PC-3 (cell line): ENCODE measurements at regions of chr20 and their contacts with region 1.

Region 1: DNA sequence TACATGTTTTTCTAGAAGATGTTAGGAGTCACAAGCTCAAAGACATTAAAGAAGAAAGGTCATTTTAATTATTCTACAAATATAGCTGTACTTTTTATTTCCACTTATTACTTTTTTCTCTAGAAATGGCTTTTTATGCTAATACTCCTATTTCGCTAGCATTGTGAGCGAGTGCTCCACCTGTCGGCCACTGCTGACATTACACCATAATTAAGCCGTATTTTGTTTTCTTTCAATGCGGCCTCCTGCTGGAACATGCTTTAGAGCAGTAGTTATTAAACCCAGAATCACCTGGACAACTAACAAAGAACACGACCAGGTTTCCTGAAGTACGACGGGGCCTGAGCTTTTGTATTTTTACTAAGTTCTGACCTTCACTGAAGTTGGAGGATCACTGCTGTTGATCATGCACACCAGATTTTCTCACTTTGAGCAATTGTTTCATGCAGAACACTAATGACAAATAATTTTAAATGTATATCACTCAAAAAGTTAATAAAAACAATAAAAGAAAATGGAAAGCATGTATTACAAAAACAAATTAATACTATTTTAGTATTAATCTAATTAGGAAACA is 74.1 kb upstream of the PAK5 start:
- DNase-seq: peak; percentile 80
- ATAC-seq: peak; percentile 59
- H3K4me3 ChIP-seq: no peak overlapping the region
- H3K27ac ChIP-seq: no peak overlapping the region
- H3K4me1 ChIP-seq: no peaks in the 10 kb centered on the region
- H3K27me3 ChIP-seq: peaks cover 45% of the 10 kb centered on the region
- CTCF ChIP-seq: peak; percentile 94

Region 2: GRCh38 chr20:8372824-8373380 is 1540.0 kb before region 1 on chr20:
- CTCF ChIA-PET with region 1: interaction called, 17 read pairs
- POLR2A ChIA-PET with region 1: no interaction called
- intact Hi-C with region 1: no loop called
- DNase-seq: no peak
- ATAC-seq: no peak
- H3K4me3 ChIP-seq: no peak overlapping the region
- H3K27ac ChIP-seq: no peak overlapping the region
- H3K4me1 ChIP-seq: no peaks in the 10 kb centered on the region
- H3K27me3 ChIP-seq: peaks cover 68% of the 10 kb centered on the region
- CTCF ChIP-seq: no peak

Region 3: GRCh38 chr20:9668381-9668780 is 244.6 kb before region 1 on chr20:
- CTCF ChIA-PET with region 1: no interaction called
- POLR2A ChIA-PET with region 1: no interaction called
- intact Hi-C with region 1: no loop called
- DNase-seq: no peak
- ATAC-seq: no peak
- H3K4me3 ChIP-seq: no peak overlapping the region
- H3K27ac ChIP-seq: no peak overlapping the region
- H3K4me1 ChIP-seq: no peaks in the 10 kb centered on the region
- H3K27me3 ChIP-seq: peaks cover 21% of the 10 kb centered on the region
- CTCF ChIP-seq: no peak

Region 4: GRCh38 chr20:10316582-10316981 is 403.6 kb after region 1 on chr20:
- CTCF ChIA-PET with region 1: no interaction called
- POLR2A ChIA-PET with region 1: no interaction called
- intact Hi-C with region 1: no loop called
- DNase-seq: peak; percentile 57
- ATAC-seq: peak; percentile 45
- H3K4me3 ChIP-seq: no peak overlapping the region
- H3K27ac ChIP-seq: no peak overlapping the region
- H3K4me1 ChIP-seq: no peaks in the 10 kb centered on the region
- H3K27me3 ChIP-seq: peaks cover 27% of the 10 kb centered on the region
- CTCF ChIP-seq: peak; percentile 73